ENCODE measurements at regions of chr12 and their contacts with region 1.

Region 1: DNA sequence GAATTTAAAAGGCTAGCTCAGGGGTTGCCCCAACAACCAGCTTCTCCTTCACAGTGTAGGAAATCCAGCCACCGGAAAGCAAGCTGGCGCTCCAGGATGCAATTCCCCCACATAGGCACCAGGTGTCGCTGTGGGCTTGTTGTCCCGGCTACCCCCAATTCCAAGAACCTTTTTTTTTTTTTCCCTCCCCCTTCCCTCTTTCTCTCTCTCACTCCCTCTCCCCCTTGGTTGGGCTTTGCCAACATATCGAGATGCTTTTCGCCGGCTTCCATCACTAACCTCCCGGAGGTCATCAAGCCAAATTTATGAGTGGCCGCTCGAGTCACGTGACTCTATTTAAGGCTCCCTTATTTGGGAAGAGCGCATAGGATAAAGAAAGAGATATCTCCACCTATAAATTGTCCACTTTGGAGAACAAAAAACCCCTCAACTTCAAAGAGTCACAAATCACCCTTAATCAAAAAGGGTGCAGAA is at the start of gene HOXC5:
- DNase-seq: peak; percentile 93
- total RNA-seq, gene HOXC5: 2.9 to 5.6 TPM

Region 2: GRCh38 chr12:54075974-54076373 is 43.3 kb after region 1 on chr12:
- intact Hi-C with region 1: loop called in 1 of 2 experiments (anchors 5 kb)
- DNase-seq: no peak

Region 3: DNA sequence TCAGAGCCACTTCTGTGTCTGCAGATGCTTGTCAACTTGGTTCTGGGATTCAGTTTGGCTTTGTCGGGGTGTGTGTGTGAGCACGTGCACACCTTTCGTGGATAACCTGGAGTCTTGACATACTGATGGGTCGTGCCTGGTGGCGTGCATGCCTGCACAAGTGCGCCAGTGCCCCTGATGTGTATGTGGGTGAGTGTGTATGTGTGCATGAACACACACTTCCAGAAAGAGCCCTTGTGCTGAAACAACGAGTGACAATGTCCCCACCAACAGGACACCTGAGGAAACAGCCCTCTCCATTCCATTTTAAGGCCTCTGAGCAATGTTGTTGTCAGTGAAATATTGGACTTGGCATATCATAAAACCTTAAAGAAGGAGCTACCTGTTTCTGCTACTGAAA is 102.2 kb after region 1 on chr12:
- intact Hi-C with region 1: loop called (anchors 5 kb)
- DNase-seq: peak; percentile 63

Region 4: GRCh38 chr12:54140588-54141388 is 108.1 kb after region 1 on chr12:
- intact Hi-C with region 1: loop called in 1 of 2 experiments (anchors 5 kb)
- DNase-seq: peak; percentile 86

Region 5: DNA sequence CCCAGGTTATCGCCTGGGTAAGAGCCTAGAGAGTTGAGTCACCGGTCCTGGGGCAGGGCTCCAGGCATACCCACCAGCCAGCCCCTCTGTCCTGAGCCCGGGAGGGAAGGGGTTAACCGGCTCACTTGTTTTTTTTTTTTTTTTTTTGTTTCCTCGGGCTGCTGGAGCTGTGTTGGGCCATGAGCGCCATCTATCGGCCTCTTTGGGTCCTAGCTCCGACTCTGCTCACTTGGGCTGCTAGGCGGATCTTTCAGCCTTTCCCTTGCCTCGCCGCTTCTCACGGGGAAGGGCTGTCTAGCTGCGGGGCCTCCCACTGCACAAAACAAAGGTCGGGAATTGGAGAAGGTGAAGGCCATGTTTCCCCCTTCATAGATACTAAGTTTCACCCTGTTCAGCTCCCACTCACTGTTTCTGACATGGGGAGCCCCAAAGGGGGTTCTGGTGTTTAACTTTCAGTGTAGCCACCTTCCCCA is 158.9 kb after region 1 on chr12:
- intact Hi-C with region 1: loop called (anchors 5 kb)
- DNase-seq: peak; percentile 93